ENCODE measurements at regions of chr2 and their contacts with region 1.

Region 1: DNA sequence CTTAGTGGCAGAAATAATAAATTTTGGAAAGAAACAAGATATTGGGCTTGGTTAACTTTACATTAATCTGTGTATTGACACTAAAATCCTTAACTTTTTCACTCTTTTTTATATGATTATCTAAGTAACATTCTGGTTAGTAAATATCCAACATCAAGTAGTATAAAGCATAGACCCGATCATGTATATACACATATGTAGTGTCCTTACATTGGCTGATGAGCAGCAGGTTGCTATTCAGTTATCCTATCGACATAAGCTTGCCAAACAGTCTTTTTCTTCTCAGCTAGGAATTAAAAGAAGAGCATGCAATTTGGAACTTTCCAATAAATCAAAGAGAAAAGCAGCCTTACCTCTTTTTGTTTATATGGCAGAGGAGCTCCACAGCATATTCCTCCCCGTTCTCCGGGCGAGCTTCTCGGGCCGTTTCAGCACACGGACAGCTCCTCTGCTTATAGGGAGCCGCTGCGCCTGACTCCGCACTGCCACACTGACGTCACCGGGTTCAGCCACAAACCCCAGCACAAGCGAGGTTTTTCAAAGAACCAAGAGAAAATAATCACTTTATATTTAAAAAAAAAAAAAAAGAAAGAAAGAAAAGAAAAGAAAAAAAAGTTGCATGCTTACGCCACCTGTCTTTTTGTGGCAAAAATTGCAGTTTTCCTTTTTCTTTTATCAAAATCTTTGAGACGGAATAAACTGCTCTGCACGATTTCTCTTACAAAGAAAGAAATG is at the start of gene SCG2:
- DNase-seq: peak; percentile 75 to 81
- H3K4me3 ChIP-seq: peak within 1 kb of the TSS; percentile 29; the same call in 1 of the 2 replicates
- H3K27ac ChIP-seq: no peak within 1 kb of the TSS
- H3K4me1 ChIP-seq: peaks cover 19% of the 10 kb centered on the region
- H3K27me3 ChIP-seq: no peaks in the 10 kb centered on the region
- CTCF ChIP-seq: peak; percentile 81
- total RNA-seq, gene SCG2: 0.48 and 0.81 TPM in 2 replicates

Region 2: DNA sequence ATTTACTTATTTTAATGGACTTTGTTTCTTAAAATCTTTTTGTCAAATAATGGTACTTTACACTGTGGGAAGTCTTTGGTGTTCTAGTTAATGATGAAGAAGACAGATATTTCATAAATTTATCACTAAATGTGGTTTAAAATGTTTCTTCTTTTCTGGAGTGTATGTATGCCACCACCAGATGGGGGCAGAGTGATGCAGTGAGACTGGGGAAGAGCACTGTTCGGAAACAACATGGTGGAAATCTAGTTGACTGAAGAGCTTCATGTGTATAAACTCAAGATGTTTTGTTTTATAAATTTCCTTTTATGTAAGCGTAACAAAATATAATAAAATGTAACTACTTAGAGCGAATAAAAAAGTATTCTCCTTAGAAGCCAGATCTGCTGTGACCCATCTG is 355.0 kb before region 1 on chr2:
- CTCF ChIA-PET with region 1: interaction called, 3 read pairs
- POLR2A ChIA-PET with region 1: no interaction called
- intact Hi-C with region 1: loop called (anchors 1 kb)
- DNase-seq: peak in 1 of 2 experiments; percentile 47
- H3K4me3 ChIP-seq: no peak overlapping the region
- H3K27ac ChIP-seq: no peak overlapping the region
- H3K4me1 ChIP-seq: no peaks in the 10 kb centered on the region
- H3K27me3 ChIP-seq: no peaks in the 10 kb centered on the region
- CTCF ChIP-seq: peak; percentile 93

Region 3: DNA sequence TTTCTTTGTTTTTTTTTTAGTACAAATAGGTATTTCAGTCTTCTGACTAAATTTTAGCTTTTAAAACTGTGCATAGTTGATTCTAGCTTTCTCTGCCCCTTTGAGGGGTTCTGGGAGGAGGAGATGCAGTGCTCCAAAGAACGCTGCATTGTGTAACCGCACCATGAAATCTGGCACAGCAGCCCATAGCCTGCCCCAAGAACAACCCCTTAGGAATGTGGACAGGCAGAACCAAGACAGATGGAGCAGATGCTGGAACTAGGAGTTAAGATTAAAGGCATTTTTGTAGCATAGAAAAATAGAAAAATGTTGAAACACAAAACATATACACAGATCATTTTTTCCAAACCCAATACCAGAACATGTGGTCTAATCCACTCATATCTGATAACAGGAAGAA is 187.5 kb before region 1 on chr2:
- CTCF ChIA-PET with region 1: no interaction called
- POLR2A ChIA-PET with region 1: no interaction called
- intact Hi-C with region 1: no loop called
- DNase-seq: no peak
- H3K4me3 ChIP-seq: no peak overlapping the region
- H3K27ac ChIP-seq: no peak overlapping the region
- H3K4me1 ChIP-seq: no peaks in the 10 kb centered on the region
- H3K27me3 ChIP-seq: no peaks in the 10 kb centered on the region
- CTCF ChIP-seq: no peak

Region 4: GRCh38 chr2:223459328-223459939 is 142.7 kb before region 1 on chr2:
- CTCF ChIA-PET with region 1: interaction called, 4 read pairs
- POLR2A ChIA-PET with region 1: no interaction called
- intact Hi-C with region 1: loop called (anchors 2 kb)
- DNase-seq: no peak
- H3K4me3 ChIP-seq: no peak overlapping the region
- H3K27ac ChIP-seq: no peak overlapping the region
- H3K4me1 ChIP-seq: peaks cover 21% of the 10 kb centered on the region
- H3K27me3 ChIP-seq: no peaks in the 10 kb centered on the region
- CTCF ChIP-seq: peak; percentile 75

Region 5: DNA sequence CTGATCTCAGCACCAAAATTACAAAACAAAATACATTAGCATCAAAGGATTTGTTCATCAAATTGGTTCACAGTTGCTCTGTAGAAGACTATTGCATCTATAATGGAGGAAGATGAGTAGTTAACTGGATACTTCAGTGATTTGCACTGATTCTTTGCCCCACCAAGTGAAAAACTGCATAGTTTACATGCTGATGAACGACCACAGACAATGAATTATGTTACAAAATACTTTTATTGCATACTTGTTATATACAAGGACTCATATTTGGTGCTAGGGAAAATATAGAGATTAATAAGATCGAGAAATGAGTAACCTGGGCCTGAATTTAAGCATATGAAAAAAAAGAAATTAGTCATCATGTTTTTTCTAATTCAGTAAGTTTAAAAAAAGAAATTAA is 107.1 kb before region 1 on chr2:
- CTCF ChIA-PET with region 1: no interaction called
- POLR2A ChIA-PET with region 1: interaction called, 20 read pairs
- intact Hi-C with region 1: no loop called
- DNase-seq: no peak
- H3K4me3 ChIP-seq: no peak overlapping the region
- H3K27ac ChIP-seq: no peak overlapping the region
- H3K4me1 ChIP-seq: no peaks in the 10 kb centered on the region
- H3K27me3 ChIP-seq: no peaks in the 10 kb centered on the region
- CTCF ChIP-seq: no peak

Region 6: GRCh38 chr2:223648755-223649154 is 46.7 kb after region 1 on chr2:
- CTCF ChIA-PET with region 1: interaction called, 14 read pairs
- POLR2A ChIA-PET with region 1: no interaction called
- intact Hi-C with region 1: no loop called
- DNase-seq: no peak
- H3K4me3 ChIP-seq: no peak overlapping the region
- H3K27ac ChIP-seq: no peak overlapping the region
- H3K4me1 ChIP-seq: no peaks in the 10 kb centered on the region
- H3K27me3 ChIP-seq: no peaks in the 10 kb centered on the region
- CTCF ChIP-seq: no peak

Region 7: DNA sequence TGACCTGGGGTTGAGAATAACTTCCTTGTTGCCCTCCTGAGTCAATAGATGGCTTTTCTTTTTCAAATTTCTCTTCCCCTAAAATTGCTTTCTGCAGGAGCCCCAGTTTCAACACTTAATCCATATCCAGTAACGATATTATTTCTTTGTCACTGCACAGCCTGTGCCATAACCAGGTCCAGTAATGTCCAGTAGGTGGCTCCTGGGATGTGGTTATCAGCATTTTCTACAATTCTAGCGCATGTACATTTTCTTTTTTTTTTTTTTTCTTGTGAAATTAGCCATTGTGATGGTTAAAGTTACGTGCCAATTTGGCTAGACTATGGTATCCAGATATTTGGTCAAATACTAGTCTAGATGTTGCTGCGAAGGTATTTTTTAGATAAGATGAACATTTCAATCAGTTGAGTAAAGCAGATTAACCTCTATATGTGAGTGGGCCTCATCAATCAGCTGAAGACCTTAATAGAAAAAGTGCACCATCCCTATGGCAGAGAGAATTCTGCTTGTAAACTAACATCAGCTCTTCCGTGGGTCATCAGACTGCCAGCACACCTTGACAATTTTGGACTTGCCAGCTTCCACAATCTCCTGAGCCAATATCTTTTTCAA is 73.0 kb after region 1 on chr2:
- CTCF ChIA-PET with region 1: no interaction called
- POLR2A ChIA-PET with region 1: no interaction called
- intact Hi-C with region 1: no loop called
- DNase-seq: peak; percentile 50 to 64
- H3K4me3 ChIP-seq: no peak overlapping the region
- H3K27ac ChIP-seq: no peak overlapping the region
- H3K4me1 ChIP-seq: no peaks in the 10 kb centered on the region
- H3K27me3 ChIP-seq: no peaks in the 10 kb centered on the region
- CTCF ChIP-seq: peak; percentile 94

Region 8: GRCh38 chr2:223692191-223692947 is 90.3 kb after region 1 on chr2:
- CTCF ChIA-PET with region 1: no interaction called
- POLR2A ChIA-PET with region 1: no interaction called
- intact Hi-C with region 1: no loop called
- DNase-seq: peak in 1 of 2 experiments; percentile 60
- H3K4me3 ChIP-seq: no peak overlapping the region
- H3K27ac ChIP-seq: no peak overlapping the region
- H3K4me1 ChIP-seq: peaks cover 15% of the 10 kb centered on the region
- H3K27me3 ChIP-seq: no peaks in the 10 kb centered on the region
- CTCF ChIP-seq: peak; percentile 79